HEK293 (cell line): ENCODE measurements at regions of chr6 and their contacts with region 1.

Region 1: GRCh38 chr6:31513456-31514165 is 15.2 kb upstream of the MCCD1 start:
- H3K4me3 ChIP-seq: no peak overlapping the region
- H3K27ac ChIP-seq: no peak overlapping the region
- H3K4me1 ChIP-seq: no peaks in the 10 kb centered on the region
- CTCF ChIP-seq: no peak

Region 2: DNA sequence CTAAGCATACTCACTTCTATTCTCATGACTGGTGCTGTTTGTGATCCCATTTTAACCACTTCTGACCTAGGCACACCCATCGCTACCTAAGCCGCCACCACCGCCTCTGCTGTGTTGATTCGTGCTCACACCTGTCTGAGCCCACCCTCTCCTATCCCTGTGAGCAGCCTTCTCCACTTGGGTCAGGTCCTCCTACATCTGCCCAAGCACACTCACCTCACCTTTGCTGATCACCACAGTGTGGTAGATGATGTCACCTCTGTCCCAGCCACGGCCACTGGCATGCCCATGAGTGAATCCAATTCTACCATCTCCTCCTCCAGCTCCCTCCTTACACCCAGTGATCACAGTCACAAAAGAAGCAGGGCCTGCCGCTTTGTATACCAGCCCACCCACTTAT is 482.5 kb before region 1 on chr6:
- CTCF ChIA-PET with region 1: no interaction called
- POLR2A ChIA-PET with region 1: no interaction called
- H3K4me3 ChIP-seq: no peak overlapping the region
- H3K27ac ChIP-seq: no peak overlapping the region
- H3K4me1 ChIP-seq: no peaks in the 10 kb centered on the region
- CTCF ChIP-seq: no peak

Region 3: DNA sequence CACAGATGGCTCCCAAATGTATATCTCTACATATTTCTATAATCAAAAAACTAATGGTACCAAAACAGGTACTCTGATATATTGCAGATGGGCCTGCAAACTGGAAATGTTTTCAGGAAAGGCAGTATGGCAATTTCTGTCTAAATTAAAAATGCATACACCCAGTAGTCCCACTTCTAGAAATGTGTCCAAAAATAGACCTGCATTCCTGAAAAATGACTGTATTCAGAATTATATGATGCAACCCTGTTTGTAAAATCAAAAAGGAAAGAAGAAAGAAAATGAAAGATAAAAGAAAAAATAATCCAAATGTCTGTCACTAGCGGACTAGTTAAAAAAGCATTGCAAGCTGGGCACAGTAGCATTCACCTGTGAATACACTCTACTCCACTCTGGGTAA is 28.6 kb before region 1 on chr6:
- CTCF ChIA-PET with region 1: no interaction called
- POLR2A ChIA-PET with region 1: no interaction called
- H3K4me3 ChIP-seq: no peak overlapping the region
- H3K27ac ChIP-seq: no peak overlapping the region
- H3K4me1 ChIP-seq: no peaks in the 10 kb centered on the region
- CTCF ChIP-seq: no peak

Region 4: DNA sequence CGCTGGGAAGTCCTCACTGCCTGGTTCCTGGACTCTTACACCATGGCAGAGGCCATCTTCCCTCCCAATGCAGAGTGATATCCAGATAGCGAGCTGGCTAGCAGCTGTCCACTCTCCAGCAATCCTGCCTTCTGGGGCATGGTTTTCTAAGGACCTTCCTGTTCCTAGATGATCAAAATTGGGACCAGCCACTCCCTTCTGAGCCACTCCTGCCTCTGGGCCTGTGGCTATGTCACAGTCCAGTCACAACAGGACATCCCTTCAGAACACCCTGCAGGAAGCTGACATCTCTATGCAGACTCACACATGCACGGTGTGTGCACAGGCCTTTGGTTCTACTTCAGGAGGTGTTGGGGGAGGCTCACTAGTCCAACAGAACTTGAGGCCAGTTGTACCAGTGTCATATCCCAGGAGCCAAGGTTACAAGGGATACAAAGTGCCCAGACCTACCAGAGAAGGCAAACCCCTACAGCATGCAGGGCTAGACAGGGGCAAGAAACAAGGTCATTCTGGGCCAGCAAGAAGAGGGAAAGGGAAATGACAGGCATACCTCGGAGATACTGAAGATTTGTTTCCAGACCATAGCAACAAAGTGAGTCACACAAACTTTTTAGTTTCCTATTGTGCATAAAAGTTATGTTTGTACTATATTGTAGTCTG is 12.5 kb after region 1 on chr6:
- CTCF ChIA-PET with region 1: interaction called, 3 read pairs
- POLR2A ChIA-PET with region 1: interaction called, 16 read pairs
- H3K4me3 ChIP-seq: no peak overlapping the region
- H3K27ac ChIP-seq: no peak overlapping the region
- H3K4me1 ChIP-seq: peaks cover 3% of the 10 kb centered on the region
- CTCF ChIP-seq: no peak

Region 5: GRCh38 chr6:31546962-31547726 is 33.5 kb after region 1 on chr6 and contains the start of gene NFKBIL1:
- CTCF ChIA-PET with region 1: interaction called, 6 read pairs
- POLR2A ChIA-PET with region 1: interaction called, 11 read pairs
- H3K4me3 ChIP-seq: peak within 1 kb of the TSS; percentile 47
- H3K27ac ChIP-seq: peak within 1 kb of the TSS; percentile 50
- H3K4me1 ChIP-seq: peaks cover 2% of the 10 kb centered on the region; the same call in 1 of the 2 replicates
- CTCF ChIP-seq: no peak; the same call in 1 of the 2 replicates